OCI-LY7 (cell line): ENCODE measurements at regions of chr12 and their contacts with region 1.

Region 1: DNA sequence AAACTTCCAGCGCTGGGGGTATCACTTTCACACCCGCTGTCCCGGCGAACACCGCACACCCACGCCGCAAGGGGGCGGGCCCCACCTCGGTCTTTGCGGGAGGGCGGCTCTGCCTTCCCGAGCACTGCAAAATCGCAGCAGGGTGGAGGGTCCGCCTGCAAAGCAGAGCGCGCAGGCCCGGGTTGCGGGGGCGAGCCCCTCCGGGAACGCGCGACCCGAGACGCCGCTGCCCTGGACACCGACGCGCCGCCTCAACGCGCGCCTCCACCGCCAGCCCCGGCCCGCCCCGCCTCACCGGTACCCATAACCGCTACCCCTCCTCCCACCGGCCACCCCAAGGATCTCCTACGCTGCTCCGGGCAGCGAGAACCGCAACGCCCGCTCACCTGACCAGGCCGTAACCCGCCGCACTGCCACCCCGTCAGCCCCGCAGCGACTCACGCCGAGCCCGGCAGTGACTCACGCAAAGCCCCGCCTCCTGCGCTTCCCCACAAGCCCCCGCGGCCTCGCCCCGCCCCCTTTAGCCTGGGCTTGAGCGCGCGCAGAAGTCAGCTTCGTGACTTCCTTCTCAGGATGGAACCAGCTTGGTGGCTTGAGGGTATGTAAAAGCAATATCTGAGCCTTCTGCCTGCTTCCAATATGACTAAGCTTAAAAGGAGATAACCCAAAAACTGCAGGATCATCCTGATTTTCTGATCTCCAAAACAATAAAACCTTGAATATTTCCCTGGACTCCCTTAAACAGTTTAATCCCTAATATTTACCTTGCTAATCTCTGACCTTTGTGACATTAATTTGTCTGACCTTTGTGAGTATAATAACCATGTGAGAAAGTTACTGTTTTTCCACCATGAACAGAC is at the start of gene RPAP3:
- DNase-seq: peak; percentile 97
- H3K4me3 ChIP-seq: peak within 1 kb of the TSS; percentile 86
- H3K27ac ChIP-seq: peak within 1 kb of the TSS; percentile 83
- H3K4me1 ChIP-seq: peaks cover 54% of the 10 kb centered on the region
- CTCF ChIP-seq: peak; percentile 74
- total RNA-seq, gene RPAP3: 21.6 and 25.1 TPM in 2 replicates

Region 2: GRCh38 chr12:45980540-45980939 is 1725.3 kb before region 1 on chr12:
- CTCF ChIA-PET with region 1: no interaction called
- POLR2A ChIA-PET with region 1: interaction called, 11 read pairs
- intact Hi-C with region 1: no loop called
- DNase-seq: no peak
- H3K4me3 ChIP-seq: no peak overlapping the region
- H3K27ac ChIP-seq: no peak overlapping the region
- H3K4me1 ChIP-seq: peaks cover 23% of the 10 kb centered on the region
- CTCF ChIP-seq: no peak